Mammary epithelial cell (primary cell): ENCODE measurements at regions of chr14 and their contacts with region 1.

Region 1: GRCh38 chr14:56874375-56874774 is 64.1 kb upstream of the OTX2 start:
- DNase-seq: peak; percentile 9
- H3K4me3 ChIP-seq: no peak overlapping the region
- H3K27ac ChIP-seq: no peak overlapping the region
- H3K4me1 ChIP-seq: no peaks in the 10 kb centered on the region
- H3K27me3 ChIP-seq: no peaks in the 10 kb centered on the region
- CTCF ChIP-seq: peak; percentile 23 to 46

Region 2: GRCh38 chr14:55819610-55820304 is 1054.6 kb before region 1 on chr14:
- CTCF ChIA-PET with region 1: no interaction called
- dilution Hi-C with region 1: no loop called
- in situ Hi-C with region 1: no loop called
- intact Hi-C with region 1: no loop called
- DNase-seq: no peak
- H3K4me3 ChIP-seq: no peak overlapping the region
- H3K27ac ChIP-seq: no peak overlapping the region
- H3K4me1 ChIP-seq: no peaks in the 10 kb centered on the region
- H3K27me3 ChIP-seq: peaks cover 4% of the 10 kb centered on the region
- CTCF ChIP-seq: no peak

Region 3: DNA sequence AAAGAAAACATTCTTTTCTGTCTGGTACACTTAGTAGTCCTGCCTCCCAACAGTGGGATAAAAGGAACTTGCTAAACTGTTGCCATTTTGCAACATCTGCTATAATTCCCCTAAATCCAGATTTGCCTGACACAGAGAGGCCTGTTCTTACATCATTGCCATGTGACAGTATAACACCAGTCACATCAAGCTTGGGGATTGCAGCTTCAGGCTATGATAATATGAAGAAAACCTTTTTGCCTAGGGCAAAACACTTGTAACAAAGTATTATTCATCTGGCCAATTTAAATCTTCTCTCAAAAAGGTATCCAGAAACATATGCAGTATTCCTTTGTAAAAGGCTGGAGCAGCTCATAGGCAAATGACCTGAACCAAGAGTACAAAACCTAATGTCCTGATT is 16.9 kb after region 1 on chr14:
- CTCF ChIA-PET with region 1: interaction called, 10 read pairs
- dilution Hi-C with region 1: no loop called
- in situ Hi-C with region 1: no loop called
- intact Hi-C with region 1: no loop called
- DNase-seq: no peak
- H3K4me3 ChIP-seq: no peak overlapping the region
- H3K27ac ChIP-seq: no peak overlapping the region
- H3K4me1 ChIP-seq: no peaks in the 10 kb centered on the region
- H3K27me3 ChIP-seq: peaks cover 2% of the 10 kb centered on the region
- CTCF ChIP-seq: no peak